ENCODE measurements at regions of chr13 and their contacts with region 1.

Region 1: GRCh38 chr13:49606747-49607648 is 21.3 kb upstream of the ARL11 start:
- DNase-seq: peak; percentile 69 to 75
- H3K4me3 ChIP-seq: no peak overlapping the region
- H3K27ac ChIP-seq: no peak overlapping the region
- H3K4me1 ChIP-seq: no peaks in the 10 kb centered on the region
- H3K27me3 ChIP-seq: no peaks in the 10 kb centered on the region
- CTCF ChIP-seq: peak; percentile 82

Region 2: DNA sequence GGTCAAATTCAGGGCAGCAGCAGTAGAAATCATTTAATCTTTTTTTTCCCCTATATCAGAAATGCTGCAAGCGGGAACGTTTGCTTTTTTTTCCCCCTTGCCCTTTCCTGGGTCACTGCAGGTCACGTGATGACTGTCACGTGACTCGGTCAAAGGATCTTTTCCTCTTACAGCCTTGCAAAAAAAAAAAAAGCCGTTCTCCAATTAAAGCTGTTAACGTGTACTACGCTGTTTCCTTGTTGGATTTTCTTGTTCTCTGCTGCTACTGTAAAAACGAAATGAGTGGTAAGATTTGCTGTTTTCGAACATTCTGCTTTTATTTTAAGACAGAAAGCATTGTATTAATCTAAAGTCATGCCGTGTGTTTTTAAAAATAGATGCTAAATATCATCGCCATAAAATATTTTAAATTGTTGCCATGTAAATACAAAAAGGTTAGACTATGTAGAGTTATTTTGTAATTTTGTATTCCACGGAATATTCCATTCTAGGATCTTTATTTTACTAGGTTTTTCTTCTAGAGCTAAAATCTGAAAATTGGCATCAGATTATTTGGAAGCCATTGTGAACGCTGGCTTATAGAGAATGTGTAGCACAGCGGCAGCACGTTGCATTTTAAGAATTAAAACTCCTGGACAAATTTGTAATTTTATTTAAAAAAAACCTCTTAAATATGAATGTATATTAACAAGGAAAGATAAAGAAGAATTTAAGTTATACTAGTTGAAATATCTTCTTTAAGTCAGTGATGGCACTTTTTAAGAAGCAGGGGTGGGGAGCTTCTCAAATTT is 496.7 kb before region 1 on chr13:
- CTCF ChIA-PET with region 1: no interaction called
- POLR2A ChIA-PET with region 1: no interaction called
- intact Hi-C with region 1: loop called (anchors 10 kb)
- DNase-seq: peak; percentile 65 to 82
- H3K4me3 ChIP-seq: peak overlapping the region; percentile 71
- H3K27ac ChIP-seq: peak overlapping the region; percentile 71
- H3K4me1 ChIP-seq: peaks cover 32% of the 10 kb centered on the region
- H3K27me3 ChIP-seq: no peaks in the 10 kb centered on the region
- CTCF ChIP-seq: no peak

Region 3: GRCh38 chr13:49278211-49278610 is 328.8 kb before region 1 on chr13:
- CTCF ChIA-PET with region 1: no interaction called
- POLR2A ChIA-PET with region 1: no interaction called
- intact Hi-C with region 1: loop called (anchors 1 kb)
- DNase-seq: no peak
- H3K4me3 ChIP-seq: no peak overlapping the region
- H3K27ac ChIP-seq: no peak overlapping the region
- H3K4me1 ChIP-seq: no peaks in the 10 kb centered on the region
- H3K27me3 ChIP-seq: no peaks in the 10 kb centered on the region
- CTCF ChIP-seq: no peak

Region 4: DNA sequence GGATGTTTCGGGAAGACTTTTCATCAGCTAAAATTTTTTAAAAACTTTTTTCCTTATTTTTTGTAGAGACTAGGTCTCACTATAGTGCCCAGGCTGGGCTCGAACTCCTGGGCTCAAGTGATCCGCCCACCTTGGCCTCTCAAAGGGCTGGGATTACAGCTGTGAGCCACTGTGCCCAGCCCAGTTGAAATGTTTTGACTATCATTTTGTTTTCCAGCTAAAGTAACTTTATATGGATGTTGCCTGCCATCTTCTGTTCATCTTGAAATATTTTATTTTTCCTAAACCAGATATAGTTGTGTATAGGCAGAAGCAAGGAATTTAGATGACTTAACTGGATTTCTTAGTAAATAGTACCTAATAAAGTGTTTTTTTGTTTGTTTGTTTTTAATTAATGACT is 170.1 kb before region 1 on chr13:
- CTCF ChIA-PET with region 1: no interaction called
- POLR2A ChIA-PET with region 1: no interaction called
- intact Hi-C with region 1: loop called (anchors 1 kb)
- DNase-seq: no peak
- H3K4me3 ChIP-seq: no peak overlapping the region
- H3K27ac ChIP-seq: no peak overlapping the region
- H3K4me1 ChIP-seq: no peaks in the 10 kb centered on the region
- H3K27me3 ChIP-seq: no peaks in the 10 kb centered on the region
- CTCF ChIP-seq: peak; percentile 51; the same call in 1 of the 2 replicates

Region 5: GRCh38 chr13:49679246-49679645 is 72.2 kb after region 1 on chr13:
- CTCF ChIA-PET with region 1: no interaction called
- POLR2A ChIA-PET with region 1: no interaction called
- intact Hi-C with region 1: no loop called
- DNase-seq: no peak
- H3K4me3 ChIP-seq: no peak overlapping the region
- H3K27ac ChIP-seq: no peak overlapping the region
- H3K4me1 ChIP-seq: no peaks in the 10 kb centered on the region
- H3K27me3 ChIP-seq: no peaks in the 10 kb centered on the region
- CTCF ChIP-seq: no peak

Region 6: GRCh38 chr13:51070005-51070649 is 1463.1 kb after region 1 on chr13:
- CTCF ChIA-PET with region 1: no interaction called
- POLR2A ChIA-PET with region 1: no interaction called
- intact Hi-C with region 1: loop called (anchors 2 kb)
- DNase-seq: peak; percentile 64 to 79
- H3K4me3 ChIP-seq: no peak overlapping the region
- H3K27ac ChIP-seq: no peak overlapping the region
- H3K4me1 ChIP-seq: no peaks in the 10 kb centered on the region
- H3K27me3 ChIP-seq: no peaks in the 10 kb centered on the region; the same call in 1 of the 2 replicates
- CTCF ChIP-seq: peak; percentile 91